ENCODE measurements at regions of chr15 and their contacts with region 1.

Region 1: GRCh38 chr15:85707519-85708338 is 87.0 kb downstream of the KLHL25 start:
- ATAC-seq: peak in 7 of 8 experiments; percentile 14 to 83 (median 50)
- H3K4me3 ChIP-seq: no peak overlapping the region
- H3K27ac ChIP-seq: peak overlapping the region in 1 of 2 donors; percentile 17
- H3K4me1 ChIP-seq: peaks cover 4 to 22% of the 10 kb centered on the region in 2 donors

Region 2: GRCh38 chr15:85284497-85284896 is 423.2 kb before region 1 on chr15:
- in situ Hi-C with region 1: no loop called
- ATAC-seq: no peak
- H3K4me3 ChIP-seq: no peak overlapping the region
- H3K27ac ChIP-seq: no peak overlapping the region
- H3K4me1 ChIP-seq: no peaks in the 10 kb centered on the region

Region 3: GRCh38 chr15:85318048-85318731 is 389.5 kb before region 1 on chr15:
- in situ Hi-C with region 1: loop called in 1 of 9 experiments (anchors 25 kb)
- ATAC-seq: peak in 3 of 8 experiments; percentile 76 to 97 (median 92)
- H3K4me3 ChIP-seq: no peak overlapping the region
- H3K27ac ChIP-seq: no peak overlapping the region
- H3K4me1 ChIP-seq: no peaks in the 10 kb centered on the region

Measured in motor neuron (in vitro differentiated cells).